ENCODE measurements at regions of chr11 and their contacts with region 1.

Region 1: GRCh38 chr11:102614485-102614884 is 10.6 kb downstream of the MMP20 start:
- DNase-seq: no peak
- H3K4me3 ChIP-seq: no peak overlapping the region
- H3K27me3 ChIP-seq: peaks cover 1% of the 10 kb centered on the region; the same call in 1 of the 2 replicates
- CTCF ChIP-seq: no peak

Region 2: DNA sequence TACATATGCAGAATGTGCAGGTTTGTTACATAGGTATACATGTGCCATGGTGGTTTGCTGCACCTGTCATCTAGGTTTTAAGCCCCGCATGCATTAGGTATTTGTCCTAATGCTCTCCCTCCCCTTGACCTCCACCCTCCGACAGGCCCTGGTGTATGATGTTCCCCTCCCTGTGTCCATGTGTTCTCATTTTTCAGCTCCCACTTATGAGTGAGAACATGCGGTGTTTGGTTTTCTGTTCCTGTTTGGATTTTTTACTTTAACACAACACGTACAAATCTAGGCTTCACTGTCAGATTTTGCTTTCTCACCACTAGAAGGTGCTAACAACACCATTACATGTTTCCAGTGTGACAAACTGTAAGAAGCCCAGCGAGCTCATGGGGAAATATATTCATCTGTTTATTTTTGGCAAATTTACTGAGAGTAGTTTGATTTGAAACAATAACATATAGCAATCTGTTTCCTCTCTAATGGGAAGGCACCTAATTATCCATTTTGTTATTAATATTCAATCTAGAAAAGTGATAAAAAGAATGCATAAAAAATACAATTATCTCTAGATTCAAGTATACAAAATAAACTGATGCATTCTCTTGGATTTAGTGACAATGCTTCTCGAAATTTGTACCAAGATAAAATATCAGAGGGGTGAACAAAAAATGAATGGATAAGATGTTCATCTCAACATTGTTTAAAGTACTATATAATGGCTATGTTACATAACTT is 320.4 kb before region 1 on chr11:
- CTCF ChIA-PET with region 1: interaction called, 12 read pairs
- POLR2A ChIA-PET with region 1: no interaction called
- DNase-seq: no peak
- H3K4me3 ChIP-seq: no peak overlapping the region
- H3K27me3 ChIP-seq: no peaks in the 10 kb centered on the region
- CTCF ChIP-seq: peak; percentile 72